ENCODE measurements at regions of chr2 and their contacts with region 1.

Region 1: GRCh38 chr2:36338817-36339125 is 16.8 kb upstream of the CRIM1 start:
- DNase-seq: peak in 1 of 2 experiments; percentile 45
- H3K4me3 ChIP-seq: no peak overlapping the region
- H3K4me3 Mint-ChIP-seq: peak overlapping the region; percentile 50
- H3K27ac Mint-ChIP-seq: peak overlapping the region; percentile 74
- H3K4me1 ChIP-seq: peaks cover 36% of the 10 kb centered on the region
- H3K4me1 Mint-ChIP-seq: peaks cover 24% of the 10 kb centered on the region
- H3K27me3 ChIP-seq: no peaks in the 10 kb centered on the region
- H3K27me3 Mint-ChIP-seq: no peaks in the 10 kb centered on the region
- CTCF ChIP-seq: no peak

Region 2: DNA sequence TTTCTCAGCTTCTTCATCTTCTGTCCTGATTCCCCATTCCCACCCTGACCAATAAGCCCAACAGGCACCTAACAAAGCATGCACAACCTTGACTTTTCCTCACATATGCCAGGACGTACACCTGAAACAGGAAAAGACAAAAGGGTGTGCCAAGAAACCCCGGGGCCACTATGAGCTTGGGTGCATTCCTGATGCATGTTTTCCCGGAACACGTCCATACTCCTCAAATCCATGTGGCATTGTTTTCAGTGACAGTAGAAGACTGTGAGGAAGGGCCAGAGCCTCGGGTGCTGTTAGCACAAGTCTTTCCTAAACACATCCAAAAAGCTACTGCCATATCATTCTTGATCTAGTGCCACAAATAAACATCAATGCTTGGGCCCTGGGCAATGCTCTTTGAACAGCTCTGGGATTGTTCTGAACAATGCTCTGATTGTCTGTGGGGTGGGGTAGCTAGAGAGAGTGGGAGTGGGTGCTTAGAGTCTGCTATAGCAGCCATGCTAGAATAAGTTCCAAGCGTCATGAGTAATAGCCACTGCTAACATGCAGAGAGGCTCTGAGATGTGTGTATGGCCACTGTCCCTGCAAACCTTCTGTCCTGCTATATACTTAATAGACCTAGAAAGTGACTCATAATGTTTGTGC is 164.9 kb before region 1 on chr2:
- CTCF ChIA-PET with region 1: no interaction called
- POLR2A ChIA-PET with region 1: interaction called, 13 read pairs
- intact Hi-C with region 1: no loop called
- DNase-seq: no peak
- H3K4me3 ChIP-seq: no peak overlapping the region
- H3K4me3 Mint-ChIP-seq: no peak overlapping the region
- H3K27ac Mint-ChIP-seq: no peak overlapping the region
- H3K4me1 ChIP-seq: no peaks in the 10 kb centered on the region
- H3K4me1 Mint-ChIP-seq: no peaks in the 10 kb centered on the region
- H3K27me3 ChIP-seq: no peaks in the 10 kb centered on the region
- H3K27me3 Mint-ChIP-seq: no peaks in the 10 kb centered on the region
- CTCF ChIP-seq: no peak

Region 3: GRCh38 chr2:36408198-36408703 is 69.5 kb after region 1 on chr2:
- CTCF ChIA-PET with region 1: no interaction called
- POLR2A ChIA-PET with region 1: no interaction called
- intact Hi-C with region 1: no loop called
- DNase-seq: peak in 1 of 2 experiments; percentile 27
- H3K4me3 ChIP-seq: no peak overlapping the region
- H3K4me3 Mint-ChIP-seq: no peak overlapping the region
- H3K27ac Mint-ChIP-seq: no peak overlapping the region
- H3K4me1 ChIP-seq: peaks cover 63% of the 10 kb centered on the region
- H3K4me1 Mint-ChIP-seq: peaks cover 29% of the 10 kb centered on the region
- H3K27me3 ChIP-seq: no peaks in the 10 kb centered on the region
- H3K27me3 Mint-ChIP-seq: no peaks in the 10 kb centered on the region
- CTCF ChIP-seq: no peak

Region 4: DNA sequence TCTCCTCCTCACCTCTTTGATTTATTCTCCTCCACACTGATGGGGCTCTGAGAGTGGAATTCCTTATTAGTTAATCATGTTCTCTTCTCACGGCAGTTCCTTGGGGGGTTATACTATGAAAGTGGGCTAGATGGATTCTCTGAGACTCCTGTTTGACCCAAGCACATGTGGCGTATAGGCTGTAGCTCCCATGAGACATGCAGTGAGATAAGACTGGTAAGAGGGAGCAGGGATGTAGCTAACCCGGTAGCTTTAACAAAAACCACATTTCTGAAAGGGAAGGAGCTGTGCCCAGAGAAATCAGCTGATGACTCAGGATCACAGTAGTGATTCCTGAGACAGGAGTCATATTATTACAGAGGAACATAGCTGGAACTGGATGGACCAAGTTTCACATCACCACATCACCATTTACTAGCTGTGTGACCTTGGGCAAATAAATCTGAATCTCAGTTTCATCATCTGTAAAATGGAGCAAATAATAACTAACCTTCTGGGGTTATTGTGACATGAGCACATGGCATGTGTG is 99.7 kb after region 1 on chr2:
- CTCF ChIA-PET with region 1: no interaction called
- POLR2A ChIA-PET with region 1: no interaction called
- intact Hi-C with region 1: no loop called
- DNase-seq: no peak
- H3K4me3 ChIP-seq: no peak overlapping the region
- H3K4me3 Mint-ChIP-seq: no peak overlapping the region
- H3K27ac Mint-ChIP-seq: peak overlapping the region; percentile 4
- H3K4me1 ChIP-seq: peaks cover 13% of the 10 kb centered on the region; the same call in 1 of the 2 replicates
- H3K4me1 Mint-ChIP-seq: peaks cover 41% of the 10 kb centered on the region
- H3K27me3 ChIP-seq: no peaks in the 10 kb centered on the region
- H3K27me3 Mint-ChIP-seq: no peaks in the 10 kb centered on the region
- CTCF ChIP-seq: no peak

Region 5: GRCh38 chr2:36568516-36569246 is 229.9 kb after region 1 on chr2:
- CTCF ChIA-PET with region 1: no interaction called
- POLR2A ChIA-PET with region 1: no interaction called
- intact Hi-C with region 1: no loop called
- DNase-seq: no peak
- H3K4me3 ChIP-seq: no peak overlapping the region
- H3K4me3 Mint-ChIP-seq: no peak overlapping the region
- H3K27ac Mint-ChIP-seq: no peak overlapping the region
- H3K4me1 ChIP-seq: peaks cover 32% of the 10 kb centered on the region
- H3K4me1 Mint-ChIP-seq: peaks cover 16% of the 10 kb centered on the region
- H3K27me3 ChIP-seq: no peaks in the 10 kb centered on the region
- H3K27me3 Mint-ChIP-seq: no peaks in the 10 kb centered on the region
- CTCF ChIP-seq: no peak

Region 6: DNA sequence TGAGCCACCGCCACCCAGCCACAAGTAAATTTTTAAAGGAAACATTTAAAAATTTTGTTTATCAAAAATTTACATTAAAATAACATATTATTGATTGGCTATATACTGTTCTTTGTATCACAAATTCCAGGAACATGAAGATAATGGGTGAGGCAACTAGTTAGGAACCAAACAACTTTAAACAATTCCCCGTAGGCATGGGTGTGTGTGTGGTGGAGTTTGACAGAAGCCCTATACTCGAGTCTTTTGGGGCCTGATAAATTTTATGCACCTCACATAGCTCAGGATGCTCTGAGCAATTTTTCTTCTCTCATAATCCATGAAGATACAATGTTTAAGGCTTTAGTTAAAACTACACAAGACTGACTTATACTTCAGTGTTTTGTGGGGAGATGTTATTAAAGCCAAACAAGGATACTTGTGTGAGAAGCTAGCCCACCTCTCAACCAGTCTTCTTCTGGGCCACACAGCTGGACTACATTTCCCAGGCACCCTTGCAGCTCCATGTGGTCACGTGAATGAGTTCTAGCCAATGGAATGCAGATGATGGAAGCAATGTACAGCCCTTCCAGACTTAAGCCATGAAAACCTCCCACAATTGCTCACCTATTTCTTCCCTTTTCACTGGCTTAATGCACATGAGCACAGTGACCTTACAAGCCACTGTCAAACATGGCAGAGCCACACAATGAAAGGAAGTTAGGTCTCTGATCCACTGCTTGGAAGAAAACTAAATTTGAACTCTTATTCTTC is 279.4 kb after region 1 on chr2:
- CTCF ChIA-PET with region 1: no interaction called
- POLR2A ChIA-PET with region 1: no interaction called
- intact Hi-C with region 1: no loop called
- DNase-seq: peak; percentile 83 to 86
- H3K4me3 ChIP-seq: no peak overlapping the region
- H3K4me3 Mint-ChIP-seq: no peak overlapping the region
- H3K27ac Mint-ChIP-seq: peak overlapping the region; percentile 26
- H3K4me1 ChIP-seq: peaks cover 12% of the 10 kb centered on the region
- H3K4me1 Mint-ChIP-seq: peaks cover 24% of the 10 kb centered on the region
- H3K27me3 ChIP-seq: no peaks in the 10 kb centered on the region
- H3K27me3 Mint-ChIP-seq: no peaks in the 10 kb centered on the region
- CTCF ChIP-seq: no peak